Cardiac septum (tissue), 1 donor: ENCODE measurements at regions of chr2 and their contacts with region 1.

Region 1: DNA sequence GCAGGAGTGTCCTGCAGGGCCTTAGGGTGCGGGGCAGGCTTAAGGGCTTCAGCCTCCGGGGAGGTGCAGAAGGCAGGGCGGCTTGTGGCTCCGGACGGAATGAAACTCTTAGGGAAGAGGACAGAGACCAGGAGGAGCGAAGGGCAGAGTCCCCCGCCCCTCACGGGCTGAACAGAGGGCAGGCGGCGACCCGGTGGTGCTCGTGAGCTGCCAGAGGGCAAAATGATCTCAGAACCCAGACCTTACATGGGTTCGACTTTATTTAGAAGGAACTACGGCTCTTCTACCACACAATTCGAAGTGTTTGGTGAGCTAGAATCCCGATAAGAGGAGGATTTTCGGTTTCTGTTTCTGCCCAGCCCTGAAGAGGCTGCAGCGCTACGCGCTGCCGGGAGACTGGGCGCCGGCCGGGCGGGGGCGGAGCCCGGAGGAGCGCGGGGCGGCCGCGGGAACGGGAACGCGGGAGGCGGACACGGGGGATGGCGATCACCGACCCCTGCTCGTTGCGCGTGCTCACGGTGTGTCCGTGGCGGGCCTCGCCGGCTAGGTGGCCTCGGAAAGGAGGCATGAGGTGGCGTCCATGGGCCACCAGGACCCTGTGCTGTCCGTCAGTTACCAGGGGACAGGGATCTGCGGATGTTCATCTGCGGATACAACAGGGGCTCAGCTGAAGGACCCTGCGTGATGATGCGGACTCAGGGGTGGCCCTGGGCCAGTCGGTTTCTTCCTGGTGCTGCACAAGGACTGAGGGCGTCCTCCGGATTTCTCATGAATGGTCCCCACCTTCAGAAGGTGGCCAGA is 4.2 kb upstream of the SP100 start:
- DNase-seq: peak; percentile 89

Region 2: GRCh38 chr2:230219419-230220331 is 192.1 kb before region 1 on chr2 and contains the start of gene SP110:
- intact Hi-C with region 1: loop called (anchors 5 kb)
- DNase-seq: peak; percentile 92
- total RNA-seq, gene SP110: 10.0 TPM